Endothelial cell of umbilical vein (primary cell): ENCODE measurements at regions of chr1 and their contacts with region 1.

Region 1: GRCh38 chr1:30106125-30106524 is 617.3 kb downstream of the MATN1 start:
- DNase-seq: peak; percentile 14
- H3K4me3 ChIP-seq: no peak overlapping the region
- H3K27ac ChIP-seq: no peak overlapping the region
- H3K4me1 ChIP-seq: no peaks in the 10 kb centered on the region
- H3K27me3 ChIP-seq: peaks cover 0 to 1% of the 10 kb centered on the region in 2 experiments
- CTCF ChIP-seq: peak; percentile 42 to 66
- POLR2A ChIP-seq: no peak

Region 2: GRCh38 chr1:29912425-29912824 is 193.7 kb before region 1 on chr1:
- CTCF ChIA-PET with region 1: no interaction called
- POLR2A ChIA-PET with region 1: no interaction called
- dilution Hi-C with region 1: no loop called
- intact Hi-C with region 1: loop called (anchors 1 kb)
- DNase-seq: peak; percentile 6
- H3K4me3 ChIP-seq: no peak overlapping the region
- H3K27ac ChIP-seq: no peak overlapping the region
- H3K4me1 ChIP-seq: no peaks in the 10 kb centered on the region
- H3K27me3 ChIP-seq: no peaks in the 10 kb centered on the region
- CTCF ChIP-seq: peak; percentile 8 to 13
- POLR2A ChIP-seq: no peak

Region 3: DNA sequence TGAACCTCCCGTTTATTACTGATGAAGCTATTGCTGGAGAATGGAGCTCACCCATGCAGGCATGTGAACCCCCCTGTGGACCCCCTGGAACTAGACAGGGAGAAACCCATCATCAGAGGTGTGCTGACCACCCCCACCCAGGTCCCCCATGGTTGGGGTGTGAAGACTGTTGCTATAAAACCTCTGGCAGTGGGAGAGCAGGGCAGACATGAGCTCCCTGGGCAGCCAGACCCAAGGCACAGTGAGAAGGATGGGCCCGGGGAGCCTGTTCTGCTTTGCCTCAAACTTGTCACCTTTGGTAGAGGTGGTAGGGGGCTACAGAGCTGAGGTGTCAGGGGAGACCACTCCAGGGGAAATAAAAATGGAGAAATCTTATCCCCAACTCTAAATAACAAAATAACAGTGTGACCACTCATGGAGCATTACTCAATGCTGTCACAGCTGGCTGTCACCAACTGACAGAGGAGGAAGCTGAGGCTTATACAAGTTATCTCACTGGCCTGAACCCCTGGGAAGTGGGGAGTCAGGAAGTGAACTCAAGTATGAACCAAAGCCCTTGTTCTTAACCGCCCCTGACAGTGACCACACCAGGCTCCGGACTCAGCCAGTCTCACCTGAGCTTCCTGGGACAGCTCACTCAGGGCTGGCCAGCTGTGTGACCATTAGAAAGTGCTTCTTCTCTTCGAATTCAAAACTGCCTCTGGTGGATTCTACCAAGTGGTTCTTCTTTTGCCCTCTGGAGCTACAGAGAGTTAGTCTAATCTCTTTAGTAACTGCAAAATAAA is 81.5 kb before region 1 on chr1:
- CTCF ChIA-PET with region 1: no interaction called
- POLR2A ChIA-PET with region 1: no interaction called
- dilution Hi-C with region 1: no loop called
- intact Hi-C with region 1: no loop called
- DNase-seq: no peak
- H3K4me3 ChIP-seq: no peak overlapping the region
- H3K27ac ChIP-seq: no peak overlapping the region
- H3K4me1 ChIP-seq: no peaks in the 10 kb centered on the region
- H3K27me3 ChIP-seq: no peaks in the 10 kb centered on the region
- CTCF ChIP-seq: no peak
- POLR2A ChIP-seq: no peak